PC-3 (cell line): ENCODE measurements at regions of chr5 and their contacts with region 1.

Region 1: GRCh38 chr5:17189381-17190036 is 27.9 kb upstream of the BASP1 start:
- DNase-seq: peak; percentile 99
- ATAC-seq: peak; percentile 45
- H3K4me3 ChIP-seq: no peak overlapping the region
- H3K27ac ChIP-seq: peak overlapping the region; percentile 1; the same call in 1 of the 2 replicates
- H3K4me1 ChIP-seq: peaks cover 53% of the 10 kb centered on the region
- H3K27me3 ChIP-seq: no peaks in the 10 kb centered on the region
- CTCF ChIP-seq: peak; percentile 100

Region 2: GRCh38 chr5:16834029-16834428 is 355.5 kb before region 1 on chr5:
- CTCF ChIA-PET with region 1: no interaction called
- POLR2A ChIA-PET with region 1: no interaction called
- intact Hi-C with region 1: no loop called
- DNase-seq: no peak
- ATAC-seq: no peak
- H3K4me3 ChIP-seq: no peak overlapping the region
- H3K27ac ChIP-seq: no peak overlapping the region
- H3K4me1 ChIP-seq: no peaks in the 10 kb centered on the region
- H3K27me3 ChIP-seq: no peaks in the 10 kb centered on the region
- CTCF ChIP-seq: no peak

Region 3: DNA sequence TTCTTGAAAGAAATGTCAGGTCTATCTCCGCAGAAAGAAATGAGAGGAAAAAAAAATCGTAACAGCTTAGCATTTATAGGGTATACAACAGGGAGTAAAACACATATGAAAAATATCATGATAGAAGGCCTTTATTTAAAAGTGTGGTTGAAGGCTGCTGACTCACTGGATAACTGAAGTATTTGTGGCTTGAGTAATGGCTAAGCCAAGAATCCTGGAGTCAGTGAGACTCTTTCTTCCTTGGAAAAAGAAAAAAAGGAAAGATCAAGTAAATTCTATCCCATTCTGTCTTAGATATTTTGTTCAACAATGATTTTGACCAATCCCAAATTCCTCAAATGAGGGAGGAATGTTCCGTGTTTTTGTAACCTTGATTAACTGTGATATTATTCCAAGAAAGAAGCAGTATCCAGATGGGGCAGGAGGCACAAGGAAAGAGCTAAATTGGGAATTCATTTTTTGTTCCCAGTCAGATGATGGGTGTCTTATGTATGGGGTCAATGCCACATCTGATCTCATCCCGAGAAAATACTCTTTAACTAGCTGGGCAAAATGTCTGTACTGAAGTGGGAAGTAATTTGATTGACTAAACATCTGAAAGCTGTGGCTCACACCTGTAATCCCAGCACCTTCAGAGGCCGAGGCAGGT is 189.1 kb before region 1 on chr5:
- CTCF ChIA-PET with region 1: no interaction called
- POLR2A ChIA-PET with region 1: no interaction called
- intact Hi-C with region 1: loop called (anchors 5 kb)
- DNase-seq: peak; percentile 99
- ATAC-seq: peak; percentile 99
- H3K4me3 ChIP-seq: peak overlapping the region; percentile 9; the same call in 1 of the 2 replicates
- H3K27ac ChIP-seq: peak overlapping the region; percentile 84
- H3K4me1 ChIP-seq: peaks cover 21% of the 10 kb centered on the region
- H3K27me3 ChIP-seq: no peaks in the 10 kb centered on the region
- CTCF ChIP-seq: no peak

Region 4: DNA sequence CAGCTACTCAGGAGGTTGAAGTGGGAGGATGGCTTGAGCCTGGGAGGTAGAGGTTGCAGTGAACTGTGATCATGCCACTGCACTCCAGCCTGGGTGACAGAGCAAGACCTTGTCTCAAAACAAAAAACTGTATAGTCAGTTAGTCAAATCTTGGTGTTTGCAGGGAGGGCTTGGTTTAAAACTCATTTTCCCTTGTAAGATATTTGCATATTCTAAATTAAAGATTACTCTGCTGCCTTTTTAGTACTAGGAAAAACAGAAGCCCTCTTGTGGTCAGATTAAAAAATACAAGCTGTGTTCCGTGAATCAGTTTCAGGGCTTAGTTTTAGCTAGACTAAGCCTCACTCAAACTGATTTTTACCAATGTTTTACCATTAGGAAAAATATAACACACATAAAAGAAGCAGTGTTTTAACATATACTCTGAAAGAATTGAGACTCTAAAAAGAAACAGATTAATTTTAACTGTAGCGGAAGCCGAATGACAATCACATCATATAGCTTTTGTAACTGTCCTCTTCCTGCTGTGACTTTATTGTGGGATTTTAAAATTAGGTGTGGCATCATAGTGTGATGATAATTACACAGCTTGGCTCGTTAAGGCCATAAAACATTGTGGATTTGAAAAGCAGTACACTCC is 56.9 kb before region 1 on chr5:
- CTCF ChIA-PET with region 1: interaction called, 8 read pairs
- POLR2A ChIA-PET with region 1: no interaction called
- intact Hi-C with region 1: loop called (anchors 2 kb)
- DNase-seq: peak; percentile 88
- ATAC-seq: no peak
- H3K4me3 ChIP-seq: no peak overlapping the region
- H3K27ac ChIP-seq: no peak overlapping the region
- H3K4me1 ChIP-seq: peaks cover 27% of the 10 kb centered on the region
- H3K27me3 ChIP-seq: no peaks in the 10 kb centered on the region
- CTCF ChIP-seq: peak; percentile 94

Region 5: DNA sequence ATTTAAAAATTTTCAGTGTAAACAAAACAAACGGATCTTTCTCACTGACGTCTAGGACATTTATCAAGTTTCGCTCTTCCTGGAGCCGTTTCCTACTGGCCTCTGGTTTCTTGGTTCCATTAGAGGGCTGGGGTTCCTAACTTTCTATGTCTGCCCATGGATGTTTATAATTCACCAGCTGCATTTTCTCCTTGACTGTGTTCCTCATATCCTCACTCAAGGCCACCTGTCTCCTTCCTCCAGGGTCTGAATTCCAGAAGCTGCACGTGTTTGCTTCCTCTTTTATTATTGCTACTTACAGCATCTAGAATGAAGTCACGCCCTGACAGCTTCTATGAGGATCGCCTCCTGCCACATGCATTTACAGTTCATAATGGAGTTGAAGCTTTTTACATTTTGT is 46.2 kb before region 1 on chr5:
- CTCF ChIA-PET with region 1: no interaction called
- POLR2A ChIA-PET with region 1: no interaction called
- intact Hi-C with region 1: loop called (anchors 5 kb)
- DNase-seq: no peak
- ATAC-seq: no peak
- H3K4me3 ChIP-seq: no peak overlapping the region
- H3K27ac ChIP-seq: no peak overlapping the region
- H3K4me1 ChIP-seq: peaks cover 15% of the 10 kb centered on the region
- H3K27me3 ChIP-seq: no peaks in the 10 kb centered on the region
- CTCF ChIP-seq: no peak